ENCODE measurements at regions of chr14 and their contacts with region 1.

Region 1: GRCh38 chr14:104826189-104826860 is 25.4 kb downstream of the ZBTB42 start:
- H3K4me3 Mint-ChIP-seq: peak overlapping the region; percentile 72
- H3K27ac Mint-ChIP-seq: peak overlapping the region; percentile 76
- H3K4me1 Mint-ChIP-seq: peaks cover 24% of the 10 kb centered on the region
- H3K27me3 Mint-ChIP-seq: peaks cover 53% of the 10 kb centered on the region

Region 2: DNA sequence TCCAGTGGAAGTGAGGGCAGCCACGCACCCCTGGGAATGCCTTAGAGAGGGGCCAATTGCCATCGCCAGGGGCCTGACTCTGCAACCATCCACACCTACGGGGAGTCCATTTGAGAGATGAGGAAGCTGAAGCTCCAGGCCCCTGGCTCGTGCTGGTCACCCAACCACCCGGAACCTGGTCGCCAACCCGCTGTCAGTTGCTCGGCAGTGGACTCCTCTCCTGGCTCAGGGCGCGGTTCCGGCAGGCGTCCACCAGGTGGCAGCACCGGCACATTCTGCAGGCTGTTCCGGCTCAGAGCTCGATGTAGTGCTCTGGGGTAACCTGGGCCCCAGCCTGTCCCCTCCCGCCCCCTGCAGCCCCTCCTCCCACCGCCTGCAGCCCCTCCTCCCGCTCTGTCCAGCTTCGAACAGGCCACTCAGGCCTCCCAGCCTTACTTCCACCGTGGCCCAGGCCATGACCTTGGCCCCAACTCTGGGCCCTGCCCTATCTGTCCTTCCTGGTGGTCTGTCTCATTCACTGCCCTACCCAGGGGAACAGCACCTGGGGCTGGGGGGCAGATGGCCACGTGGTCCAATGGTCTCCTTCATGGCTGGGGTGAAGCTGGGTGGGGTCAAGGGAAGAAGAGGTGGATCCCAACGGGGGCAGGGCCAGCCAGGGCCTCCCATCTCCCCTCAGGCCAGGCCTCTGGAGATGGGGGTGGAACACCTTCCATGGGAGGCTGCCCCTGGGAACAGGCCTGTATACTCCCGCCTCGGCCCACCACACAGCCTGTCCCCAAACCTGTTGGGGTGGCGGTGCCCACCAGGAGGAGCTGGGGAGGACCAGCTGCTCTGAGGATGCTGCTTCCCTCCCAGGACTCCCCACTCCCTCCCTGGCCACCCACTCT is 57.6 kb before region 1 on chr14:
- intact Hi-C with region 1: loop called (anchors 1 kb)
- H3K4me3 Mint-ChIP-seq: no peak overlapping the region
- H3K27ac Mint-ChIP-seq: no peak overlapping the region
- H3K4me1 Mint-ChIP-seq: peaks cover 27% of the 10 kb centered on the region
- H3K27me3 Mint-ChIP-seq: no peaks in the 10 kb centered on the region

Region 3: GRCh38 chr14:104786091-104786586 is 40.2 kb before region 1 on chr14:
- intact Hi-C with region 1: loop called (anchors 5 kb)
- H3K4me3 Mint-ChIP-seq: peak overlapping the region; percentile 64
- H3K27ac Mint-ChIP-seq: peak overlapping the region; percentile 91
- H3K4me1 Mint-ChIP-seq: peaks cover 92% of the 10 kb centered on the region
- H3K27me3 Mint-ChIP-seq: no peaks in the 10 kb centered on the region